ENCODE measurements at regions of chr2 and their contacts with region 1.

Region 1: GRCh38 chr2:98385050-98385699 is 38.9 kb downstream of the CNGA3 start:
- DNase-seq: peak; percentile 43 to 90 (median 76)
- ATAC-seq: peak; percentile 88 to 98 (median 96)
- H3K4me3 ChIP-seq: no peak overlapping the region
- H3K27ac ChIP-seq: no peak overlapping the region
- H3K4me1 ChIP-seq: no peaks in the 10 kb centered on the region
- H3K27me3 ChIP-seq: no peaks in the 10 kb centered on the region
- CTCF ChIP-seq: peak; percentile 79 to 93 (median 90)

Region 2: DNA sequence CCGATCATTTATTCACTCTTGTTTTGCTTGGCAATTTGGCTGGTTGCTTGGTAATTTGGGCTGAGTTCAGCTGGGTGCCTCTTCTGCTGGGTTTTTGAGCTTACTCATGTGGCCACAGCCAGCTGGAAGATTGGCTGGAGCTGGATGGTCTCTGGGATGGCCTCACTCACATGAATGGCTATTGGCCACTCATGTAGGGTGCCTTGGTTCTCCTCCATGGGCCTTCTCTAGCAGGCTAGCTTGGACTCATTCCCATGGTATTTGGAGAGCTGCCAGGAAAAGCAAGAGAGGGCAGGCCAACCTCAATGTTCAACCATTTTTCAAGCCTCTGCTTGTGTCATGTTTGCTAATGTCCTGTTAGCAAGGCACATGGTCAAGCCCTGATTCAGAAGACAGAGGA is 654.9 kb before region 1 on chr2:
- intact Hi-C with region 1: loop called in 1 of 3 experiments (anchors 10 kb)
- DNase-seq: no peak
- ATAC-seq: no peak
- H3K4me3 ChIP-seq: no peak overlapping the region
- H3K27ac ChIP-seq: no peak overlapping the region
- H3K4me1 ChIP-seq: no peaks in the 10 kb centered on the region
- H3K27me3 ChIP-seq: no peaks in the 10 kb centered on the region
- CTCF ChIP-seq: no peak

Region 3: DNA sequence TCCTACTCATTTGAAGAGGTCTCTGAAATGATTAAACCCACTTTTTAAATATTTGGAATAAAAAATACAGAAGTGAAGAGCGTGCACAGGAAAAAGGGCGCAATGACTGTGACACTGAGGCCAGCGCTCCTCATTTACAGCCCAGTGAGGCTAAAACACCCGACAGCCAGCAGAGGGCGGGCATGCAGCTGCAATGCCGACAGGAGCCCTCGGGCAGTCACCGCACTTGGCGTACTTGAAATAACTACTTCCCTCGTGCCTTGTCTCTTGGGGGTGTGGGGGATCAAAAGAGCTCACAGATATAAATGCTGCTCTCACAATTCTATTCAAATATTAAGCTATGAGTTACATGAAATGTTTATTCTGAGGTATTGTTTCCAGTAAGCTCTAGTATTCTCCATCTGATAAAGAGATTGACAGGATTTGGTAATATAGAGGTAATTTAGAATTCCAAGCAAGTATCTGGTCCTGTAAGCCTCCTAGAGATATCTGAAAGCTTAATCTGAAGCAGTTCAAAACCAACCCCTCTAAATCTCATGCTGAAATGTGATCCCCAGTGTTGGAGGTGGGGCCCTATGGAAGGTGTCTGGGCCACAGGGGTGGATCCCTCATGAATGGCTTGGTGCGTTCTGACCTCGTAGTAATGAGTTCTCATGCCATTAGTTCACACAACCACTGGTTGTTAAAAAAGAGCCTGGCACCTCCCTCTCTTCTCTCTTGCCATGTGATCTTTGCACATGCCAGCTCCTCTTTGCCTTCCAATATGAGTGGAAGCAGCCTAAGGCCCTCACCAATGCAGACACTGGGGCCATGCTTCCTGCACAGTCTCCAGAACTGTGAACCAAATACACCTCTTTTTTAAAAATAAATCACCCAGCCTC is 578.2 kb before region 1 on chr2:
- intact Hi-C with region 1: loop called in 2 of 3 experiments (anchors 5 to 10 kb)
- DNase-seq: peak; percentile 58 to 90 (median 77)
- ATAC-seq: peak; percentile 94 to 100 (median 99)
- H3K4me3 ChIP-seq: no peak overlapping the region
- H3K27ac ChIP-seq: no peak overlapping the region
- H3K4me1 ChIP-seq: no peaks in the 10 kb centered on the region
- H3K27me3 ChIP-seq: no peaks in the 10 kb centered on the region
- CTCF ChIP-seq: peak; percentile 63 to 93 (median 82)

Region 4: DNA sequence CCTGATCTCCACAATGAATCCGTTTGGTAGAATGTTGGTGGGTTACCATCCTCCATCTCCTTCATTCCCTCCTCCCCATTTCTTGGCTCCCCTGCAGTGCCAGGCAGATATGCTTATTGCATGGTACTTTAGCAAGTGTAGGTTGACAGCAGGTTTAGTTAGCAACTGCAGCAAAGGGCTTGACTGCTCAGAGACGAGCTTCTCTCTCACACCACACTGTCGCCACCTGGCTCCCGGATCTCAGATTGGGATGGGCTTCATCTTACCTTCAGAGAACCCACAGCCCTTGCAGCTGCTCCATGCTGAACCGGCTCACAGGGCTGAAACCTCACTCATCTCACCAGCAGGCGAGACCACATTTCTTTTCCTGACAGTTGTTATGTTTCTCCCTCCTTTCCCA is 209.4 kb before region 1 on chr2:
- intact Hi-C with region 1: loop called in 1 of 3 experiments (anchors 5 kb)
- DNase-seq: no peak
- ATAC-seq: peak in 1 of 4 donors; percentile 54
- H3K4me3 ChIP-seq: no peak overlapping the region
- H3K27ac ChIP-seq: no peak overlapping the region
- H3K4me1 ChIP-seq: no peaks in the 10 kb centered on the region
- H3K27me3 ChIP-seq: no peaks in the 10 kb centered on the region
- CTCF ChIP-seq: no peak